AG04450 (cell line): ENCODE measurements at regions of chr2 and their contacts with region 1.

Region 1: GRCh38 chr2:85277416-85278158 is 50.2 kb downstream of the TGOLN2 start:
- DNase-seq: peak; percentile 85
- H3K4me3 ChIP-seq: peak overlapping the region; percentile 34
- H3K27ac ChIP-seq: peak overlapping the region; percentile 96
- H3K27me3 ChIP-seq: no peaks in the 10 kb centered on the region
- CTCF ChIP-seq: no peak

Region 2: DNA sequence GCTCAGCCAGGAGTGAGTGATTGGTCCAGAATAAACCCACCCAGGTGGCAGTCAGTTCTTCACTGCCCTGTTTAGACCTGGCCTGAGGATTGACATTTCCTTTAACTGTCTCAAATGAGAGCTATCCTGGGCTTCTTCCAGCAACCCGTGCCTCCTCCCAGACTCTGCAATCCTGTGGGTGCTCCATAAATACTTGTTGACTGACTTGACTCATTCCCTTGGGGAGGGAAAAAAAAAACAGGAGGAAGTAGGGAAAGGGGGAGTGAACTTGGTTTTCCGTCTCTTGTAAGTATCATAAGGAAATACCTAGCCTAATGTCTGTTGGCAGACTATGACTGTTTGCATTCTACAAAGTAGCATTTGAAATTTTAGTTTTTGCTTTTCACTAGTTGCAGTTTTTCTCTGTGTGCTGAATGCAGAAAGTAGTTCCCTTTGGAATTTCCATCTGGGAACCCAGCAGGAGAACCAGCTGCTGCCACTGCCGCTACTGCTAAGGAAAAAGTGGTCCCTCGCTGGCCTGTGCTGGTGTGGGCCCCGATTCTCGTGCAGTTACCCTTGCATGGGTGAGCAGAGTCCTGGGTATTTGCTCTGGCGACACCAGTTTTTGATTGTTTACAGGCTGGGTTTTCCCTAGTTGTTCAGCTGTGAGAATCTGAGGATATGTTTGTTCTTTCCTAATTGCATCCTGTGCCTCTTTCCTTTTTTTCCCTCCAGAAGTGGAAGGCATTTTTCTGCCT is 28.6 kb before region 1 on chr2:
- CTCF ChIA-PET with region 1: no interaction called
- POLR2A ChIA-PET with region 1: interaction called, 10 read pairs
- DNase-seq: peak; percentile 82
- H3K4me3 ChIP-seq: peak overlapping the region; percentile 29; the same call in 1 of the 2 replicates
- H3K27ac ChIP-seq: peak overlapping the region; percentile 90
- H3K27me3 ChIP-seq: no peaks in the 10 kb centered on the region
- CTCF ChIP-seq: no peak

Region 3: DNA sequence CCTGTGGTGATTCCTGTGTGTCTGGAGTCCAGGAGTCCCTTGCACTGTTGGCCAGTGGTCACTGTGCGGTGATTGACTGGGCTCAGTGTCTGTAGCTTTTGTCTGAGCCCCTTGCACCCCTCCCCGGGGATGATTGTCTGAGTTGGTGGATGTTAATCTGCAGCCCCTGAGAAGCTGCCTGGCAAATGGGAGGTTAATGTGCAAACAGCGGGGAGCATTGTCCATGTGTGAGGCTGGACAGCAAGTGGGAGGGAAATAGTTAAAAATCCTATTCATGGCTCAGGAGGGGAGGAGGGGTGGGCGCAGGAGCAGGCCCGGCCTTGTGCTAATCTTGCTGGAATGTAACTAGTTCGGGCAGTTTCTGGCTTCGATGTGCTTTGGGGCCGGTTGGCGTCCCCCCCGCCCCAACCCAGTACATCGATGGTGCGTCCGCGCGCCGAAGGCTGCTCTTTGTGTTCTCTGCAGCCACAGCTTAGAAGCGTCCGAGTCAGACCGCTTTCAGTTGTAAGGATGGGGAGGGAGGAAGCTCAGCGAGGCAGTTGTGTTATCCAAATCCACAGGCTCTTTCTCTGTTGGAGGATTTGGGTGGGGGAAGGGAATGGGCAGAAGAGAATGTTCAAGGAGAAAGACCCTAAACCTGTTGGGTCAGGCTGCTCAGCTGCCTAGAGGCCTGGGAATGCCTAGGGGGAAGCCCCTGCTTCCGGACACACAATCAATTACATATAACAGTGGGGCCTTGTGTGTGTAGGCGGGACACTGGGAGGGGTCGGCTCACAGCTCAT is 21.6 kb before region 1 on chr2:
- CTCF ChIA-PET with region 1: interaction called, 3 read pairs
- POLR2A ChIA-PET with region 1: interaction called, 17 read pairs
- DNase-seq: peak; percentile 54
- H3K4me3 ChIP-seq: peak overlapping the region; percentile 50
- H3K27ac ChIP-seq: peak overlapping the region; percentile 80
- H3K27me3 ChIP-seq: no peaks in the 10 kb centered on the region
- CTCF ChIP-seq: no peak

Region 4: DNA sequence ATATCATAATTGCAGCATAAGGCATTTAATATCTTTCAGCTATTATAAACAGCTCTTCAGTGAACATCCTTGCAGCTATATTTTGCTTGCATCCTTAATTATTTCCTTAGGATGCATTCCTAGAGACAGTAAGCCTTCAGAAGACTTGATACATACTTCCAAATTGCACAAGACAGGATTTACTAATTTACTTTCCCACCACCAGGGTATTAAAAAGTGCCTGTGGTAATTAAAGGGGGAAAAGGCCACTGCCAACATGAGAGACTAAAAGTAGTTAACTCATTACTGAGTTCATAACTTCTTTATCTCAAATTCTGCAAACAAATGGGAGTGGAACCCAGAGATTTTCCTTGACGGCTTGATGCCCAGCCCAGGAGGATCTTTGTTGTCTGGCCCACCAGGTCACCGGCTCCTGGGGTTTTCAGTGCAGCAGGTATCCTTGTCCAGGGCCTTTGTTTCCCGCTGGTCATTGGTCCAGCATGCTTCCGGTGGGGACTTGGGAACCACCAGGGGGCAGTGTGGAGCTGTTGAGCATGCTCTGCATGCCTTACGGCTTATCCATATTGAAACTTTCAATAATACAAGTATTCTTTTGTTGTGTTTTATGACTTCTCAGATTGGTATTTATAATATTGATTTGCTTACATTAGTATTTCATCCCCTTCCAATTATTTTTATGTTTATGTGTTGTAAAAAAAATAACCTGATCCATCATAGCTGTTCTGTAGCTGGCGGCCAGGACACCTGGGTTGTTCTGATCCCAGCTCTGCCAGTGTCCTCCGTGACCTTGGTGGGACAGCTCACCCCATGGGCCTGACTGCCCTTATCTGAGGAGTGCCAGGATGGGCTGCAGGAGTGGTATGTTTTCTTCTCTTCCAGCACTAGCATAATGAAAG is 11.2 kb before region 1 on chr2:
- CTCF ChIA-PET with region 1: interaction called, 12 read pairs
- POLR2A ChIA-PET with region 1: interaction called, 14 read pairs
- DNase-seq: no peak
- H3K4me3 ChIP-seq: no peak overlapping the region
- H3K27ac ChIP-seq: no peak overlapping the region
- H3K27me3 ChIP-seq: no peaks in the 10 kb centered on the region
- CTCF ChIP-seq: peak; percentile 82